A673 (cell line): ENCODE measurements at regions of chr19 and their contacts with region 1.

Region 1: GRCh38 chr19:18437491-18438330 is at the start of gene ISYNA1:
- DNase-seq: peak; percentile 67
- H3K4me3 ChIP-seq: peak within 1 kb of the TSS; percentile 66
- H3K27ac ChIP-seq: peak within 1 kb of the TSS; percentile 84
- H3K4me1 ChIP-seq: peaks cover 47% of the 10 kb centered on the region
- H3K27me3 ChIP-seq: no peaks in the 10 kb centered on the region
- CTCF ChIP-seq: no peak
- total RNA-seq, gene ISYNA1: 153 and 223 TPM in 2 replicates

Region 2: DNA sequence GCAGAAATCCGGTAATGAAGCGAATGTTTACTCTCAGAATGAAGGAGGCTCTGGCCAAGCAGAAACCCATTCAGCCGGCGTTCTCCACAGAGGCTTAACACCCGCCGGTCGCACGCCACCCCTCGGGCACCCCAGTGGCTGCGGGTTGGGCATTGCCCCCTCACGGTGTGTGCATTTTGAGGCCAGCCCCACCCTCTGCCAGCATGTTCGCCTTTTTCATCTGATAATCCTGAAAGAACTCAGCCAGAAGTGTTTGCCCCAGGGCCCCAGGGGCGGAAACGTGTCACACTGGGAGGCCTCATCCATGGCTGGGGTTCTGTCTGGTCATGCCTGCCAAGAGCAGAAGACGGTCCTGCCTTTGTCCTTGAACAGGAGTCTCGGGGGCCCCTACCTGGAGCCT is 319.2 kb after region 1 on chr19:
- CTCF ChIA-PET with region 1: no interaction called
- POLR2A ChIA-PET with region 1: no interaction called
- intact Hi-C with region 1: no loop called
- DNase-seq: peak; percentile 42
- H3K4me3 ChIP-seq: no peak overlapping the region
- H3K27ac ChIP-seq: no peak overlapping the region
- H3K4me1 ChIP-seq: peaks cover 4% of the 10 kb centered on the region
- H3K27me3 ChIP-seq: no peaks in the 10 kb centered on the region
- CTCF ChIP-seq: no peak

Region 3: GRCh38 chr19:18966307-18966706 is 528.6 kb after region 1 on chr19:
- CTCF ChIA-PET with region 1: no interaction called
- POLR2A ChIA-PET with region 1: interaction called, 12 read pairs
- intact Hi-C with region 1: no loop called
- DNase-seq: no peak
- H3K4me3 ChIP-seq: no peak overlapping the region
- H3K27ac ChIP-seq: no peak overlapping the region
- H3K4me1 ChIP-seq: peaks cover 15% of the 10 kb centered on the region
- H3K27me3 ChIP-seq: no peaks in the 10 kb centered on the region
- CTCF ChIP-seq: no peak